HEK293 (cell line): ENCODE measurements at regions of chrX and their contacts with region 1.

Region 1: GRCh38 chrX:47482512-47483309 is at the start of gene ZNF41:
- H3K4me3 ChIP-seq: peak within 1 kb of the TSS; percentile 77
- H3K27ac ChIP-seq: peak within 1 kb of the TSS; percentile 82
- H3K4me1 ChIP-seq: no peaks in the 10 kb centered on the region; the same call in 1 of the 2 replicates
- CTCF ChIP-seq: no peak

Region 2: GRCh38 chrX:47420265-47420664 is 62.4 kb before region 1 on chrX:
- CTCF ChIA-PET with region 1: no interaction called
- POLR2A ChIA-PET with region 1: no interaction called
- H3K4me3 ChIP-seq: no peak overlapping the region
- H3K27ac ChIP-seq: no peak overlapping the region
- H3K4me1 ChIP-seq: no peaks in the 10 kb centered on the region
- CTCF ChIP-seq: no peak

Region 3: GRCh38 chrX:47456080-47456479 is 26.6 kb before region 1 on chrX:
- CTCF ChIA-PET with region 1: no interaction called
- POLR2A ChIA-PET with region 1: no interaction called
- H3K4me3 ChIP-seq: no peak overlapping the region
- H3K27ac ChIP-seq: no peak overlapping the region
- H3K4me1 ChIP-seq: no peaks in the 10 kb centered on the region
- CTCF ChIP-seq: no peak

Region 4: DNA sequence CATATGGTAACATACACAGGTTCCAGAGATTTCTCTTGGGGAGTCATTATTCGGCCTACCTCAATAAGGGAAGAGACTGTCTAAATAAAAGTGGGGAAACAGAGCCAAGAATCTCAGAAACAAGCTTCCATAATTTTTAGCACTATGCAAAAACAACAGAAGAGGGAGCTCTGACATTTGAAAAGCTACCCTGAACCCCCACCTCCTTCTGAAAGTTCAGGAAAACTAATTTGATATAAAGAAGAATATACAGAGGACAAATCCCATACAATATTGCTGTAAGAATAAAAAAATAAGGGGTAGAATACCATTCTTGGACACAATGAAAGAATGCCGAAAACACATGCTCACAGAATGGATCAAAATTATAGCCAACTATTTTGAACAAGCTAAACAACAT is 14.6 kb after region 1 on chrX:
- CTCF ChIA-PET with region 1: interaction called, 11 read pairs
- POLR2A ChIA-PET with region 1: no interaction called
- H3K4me3 ChIP-seq: no peak overlapping the region
- H3K27ac ChIP-seq: no peak overlapping the region
- H3K4me1 ChIP-seq: no peaks in the 10 kb centered on the region
- CTCF ChIP-seq: 0 out of 2 replicates have a peak, but pooled peaks have one; percentile 7